Activated CD4-positive, alpha-beta T cell treated with anti-CD3 and anti-CD28 coated beads, Interleukin-2, amount 10 ng/mL, durations not matched to agents 24 days and 14 days (primary cell): ENCODE measurements at regions of chr3 and their contacts with region 1.

Region 1: DNA sequence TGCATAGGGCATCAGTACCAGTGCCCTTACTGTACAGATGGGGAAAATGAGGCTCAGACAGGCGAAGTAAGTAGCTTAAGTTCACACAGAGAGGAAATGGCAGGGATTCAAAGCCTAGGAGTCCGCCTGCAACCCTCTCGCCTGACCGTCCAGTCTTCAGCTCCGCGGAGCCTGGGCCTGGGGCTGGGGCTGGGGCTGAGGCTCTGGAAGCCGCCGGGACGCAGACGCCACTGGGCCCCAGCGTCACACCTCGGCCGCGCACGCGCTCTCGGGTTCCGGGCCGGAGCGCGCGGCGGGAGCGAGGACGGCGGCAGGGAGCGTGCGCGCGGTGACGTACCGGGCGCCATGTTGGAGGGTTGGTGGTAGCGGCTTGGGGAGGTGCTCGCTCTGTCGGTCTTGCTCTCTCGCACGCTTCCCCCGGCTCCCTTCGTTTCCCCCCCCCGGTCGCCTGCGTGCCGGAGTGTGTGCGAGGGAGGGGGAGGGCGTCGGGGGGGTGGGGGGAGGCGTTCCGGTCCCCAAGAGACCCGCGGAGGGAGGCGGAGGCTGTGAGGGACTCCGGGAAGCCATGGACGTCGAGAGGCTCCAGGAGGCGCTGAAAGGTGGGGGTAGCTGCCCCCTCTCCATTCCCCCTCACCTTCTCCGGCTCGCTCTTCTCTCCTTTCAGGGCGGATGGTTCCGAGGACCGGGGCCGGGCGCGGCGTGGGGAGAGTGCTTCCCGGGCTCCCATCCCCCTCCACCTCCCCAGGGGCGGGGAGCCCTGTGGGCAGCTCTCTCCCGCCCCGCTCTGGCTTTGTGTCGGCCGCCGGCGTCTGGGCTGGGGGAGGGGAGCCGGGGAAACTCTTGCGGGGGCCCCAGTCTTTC is at the start of gene PPP4R2:
- DNase-seq: peak; percentile 98
- H3K4me3 Mint-ChIP-seq: peak within 1 kb of the TSS; percentile 89
- H3K27ac Mint-ChIP-seq: peak within 1 kb of the TSS; percentile 89
- H3K4me1 Mint-ChIP-seq: peaks cover 35% of the 10 kb centered on the region
- H3K27me3 Mint-ChIP-seq: no peaks in the 10 kb centered on the region
- total RNA-seq, gene PPP4R2: 105 and 107 TPM in 2 replicates

Region 2: DNA sequence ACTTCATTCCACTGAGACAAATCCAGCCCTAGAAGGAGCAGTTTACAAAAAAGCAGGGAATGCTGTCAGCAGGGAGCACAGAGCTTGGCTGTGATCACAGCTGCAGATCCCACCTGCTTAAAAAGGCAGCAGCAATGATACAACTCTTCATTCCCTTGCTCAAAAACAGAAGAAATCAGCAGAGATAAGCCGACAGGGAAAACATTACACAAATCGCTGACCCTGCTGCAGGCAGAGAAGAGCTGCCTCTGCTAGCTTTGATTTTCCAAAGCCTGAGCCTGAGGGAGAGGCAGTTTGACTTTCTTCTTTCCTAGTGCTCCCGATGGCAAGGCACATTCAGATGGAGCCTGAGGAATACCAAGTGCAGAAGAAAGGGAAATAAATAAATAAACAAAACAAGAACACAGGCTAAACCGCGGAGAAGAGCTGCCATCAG is 228.7 kb before region 1 on chr3:
- intact Hi-C with region 1: no loop called
- DNase-seq: no peak
- H3K4me3 Mint-ChIP-seq: no peak overlapping the region
- H3K27ac Mint-ChIP-seq: no peak overlapping the region
- H3K4me1 Mint-ChIP-seq: peaks cover 4% of the 10 kb centered on the region
- H3K27me3 Mint-ChIP-seq: no peaks in the 10 kb centered on the region

Region 3: DNA sequence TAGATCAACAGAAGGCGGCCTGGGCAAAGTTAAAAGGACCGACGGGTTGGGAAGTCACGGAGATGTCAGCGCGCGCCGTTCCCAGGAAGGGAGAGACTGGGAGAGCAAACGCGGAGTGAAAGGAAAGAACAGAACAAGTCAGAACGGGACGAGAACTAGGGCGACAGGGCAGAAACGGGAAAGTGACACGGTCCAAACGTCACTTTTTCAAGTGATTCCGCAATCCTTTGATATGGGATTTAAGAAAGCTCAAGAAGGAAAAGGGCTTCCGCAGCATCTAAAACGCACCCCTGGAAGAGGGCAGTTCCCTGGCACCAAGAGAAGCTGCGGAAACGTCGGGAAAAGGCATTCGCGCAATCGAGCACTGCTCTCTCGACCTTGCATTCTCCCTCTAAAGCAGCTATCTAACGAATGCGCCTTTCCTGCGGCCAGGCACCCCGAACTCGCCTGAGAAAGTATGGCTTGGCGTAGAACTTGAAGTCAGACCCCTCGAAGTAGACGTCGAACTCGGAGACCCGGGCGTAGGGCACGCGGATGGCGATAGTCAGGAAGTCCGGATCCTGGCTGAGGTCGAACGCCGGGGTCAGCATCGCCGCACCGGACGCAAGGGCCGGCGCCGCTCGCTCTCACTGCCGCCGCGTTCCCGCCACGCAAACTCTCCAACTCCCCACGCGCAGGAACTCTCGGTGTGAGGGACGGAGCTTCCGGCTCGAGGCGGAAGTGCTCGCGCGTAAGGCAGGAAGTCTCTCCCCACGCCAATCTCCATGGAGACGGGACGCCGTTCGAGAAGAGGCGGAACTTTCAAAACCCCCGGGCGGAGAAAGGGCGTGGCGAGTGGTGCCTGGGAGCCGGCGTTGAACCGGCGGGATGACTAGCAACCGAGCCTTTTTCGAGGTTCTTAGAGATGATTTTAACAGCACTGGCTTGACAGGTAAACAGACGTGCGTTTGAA is 148.7 kb before region 1 on chr3 and contains the start of gene SHQ1:
- intact Hi-C with region 1: loop called (anchors 2 kb)
- DNase-seq: peak; percentile 99
- H3K4me3 Mint-ChIP-seq: peak within 1 kb of the TSS; percentile 93
- H3K27ac Mint-ChIP-seq: peak within 1 kb of the TSS; percentile 91
- H3K4me1 Mint-ChIP-seq: peaks cover 41% of the 10 kb centered on the region
- H3K27me3 Mint-ChIP-seq: no peaks in the 10 kb centered on the region
- total RNA-seq, gene SHQ1: 46.8 and 47.2 TPM in 2 replicates

Region 4: DNA sequence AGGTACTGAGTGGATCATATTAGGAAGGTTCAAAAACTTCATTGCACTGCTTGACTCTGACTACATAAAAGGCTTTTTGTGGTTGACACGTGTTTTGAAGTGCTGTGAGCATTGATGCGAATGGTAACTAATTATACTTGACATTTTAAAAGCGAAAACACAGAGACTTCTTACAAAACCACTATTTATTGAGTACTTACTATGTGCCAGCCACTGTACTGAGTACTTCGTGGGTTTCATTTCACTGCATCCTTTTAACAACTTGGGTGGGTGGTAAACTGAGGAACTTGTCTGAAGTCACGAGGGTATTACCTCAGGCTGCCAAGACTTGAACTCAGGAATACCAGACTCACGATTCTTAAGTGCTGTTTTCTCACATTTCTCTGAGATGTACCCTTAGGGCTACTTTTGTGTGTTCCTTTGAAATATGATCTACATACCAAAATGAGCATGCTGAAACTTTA is 45.4 kb before region 1 on chr3:
- intact Hi-C with region 1: loop called (anchors 1 kb)
- DNase-seq: no peak
- H3K4me3 Mint-ChIP-seq: no peak overlapping the region
- H3K27ac Mint-ChIP-seq: peak overlapping the region; percentile 34
- H3K4me1 Mint-ChIP-seq: peaks cover 14% of the 10 kb centered on the region
- H3K27me3 Mint-ChIP-seq: peaks cover 5% of the 10 kb centered on the region

Region 5: GRCh38 chr3:72977060-72977808 is 19.5 kb before region 1 on chr3:
- intact Hi-C with region 1: loop called (anchors 1 kb)
- DNase-seq: no peak
- H3K4me3 Mint-ChIP-seq: no peak overlapping the region
- H3K27ac Mint-ChIP-seq: peak overlapping the region; percentile 85
- H3K4me1 Mint-ChIP-seq: peaks cover 8% of the 10 kb centered on the region
- H3K27me3 Mint-ChIP-seq: peaks cover 8% of the 10 kb centered on the region

Region 6: DNA sequence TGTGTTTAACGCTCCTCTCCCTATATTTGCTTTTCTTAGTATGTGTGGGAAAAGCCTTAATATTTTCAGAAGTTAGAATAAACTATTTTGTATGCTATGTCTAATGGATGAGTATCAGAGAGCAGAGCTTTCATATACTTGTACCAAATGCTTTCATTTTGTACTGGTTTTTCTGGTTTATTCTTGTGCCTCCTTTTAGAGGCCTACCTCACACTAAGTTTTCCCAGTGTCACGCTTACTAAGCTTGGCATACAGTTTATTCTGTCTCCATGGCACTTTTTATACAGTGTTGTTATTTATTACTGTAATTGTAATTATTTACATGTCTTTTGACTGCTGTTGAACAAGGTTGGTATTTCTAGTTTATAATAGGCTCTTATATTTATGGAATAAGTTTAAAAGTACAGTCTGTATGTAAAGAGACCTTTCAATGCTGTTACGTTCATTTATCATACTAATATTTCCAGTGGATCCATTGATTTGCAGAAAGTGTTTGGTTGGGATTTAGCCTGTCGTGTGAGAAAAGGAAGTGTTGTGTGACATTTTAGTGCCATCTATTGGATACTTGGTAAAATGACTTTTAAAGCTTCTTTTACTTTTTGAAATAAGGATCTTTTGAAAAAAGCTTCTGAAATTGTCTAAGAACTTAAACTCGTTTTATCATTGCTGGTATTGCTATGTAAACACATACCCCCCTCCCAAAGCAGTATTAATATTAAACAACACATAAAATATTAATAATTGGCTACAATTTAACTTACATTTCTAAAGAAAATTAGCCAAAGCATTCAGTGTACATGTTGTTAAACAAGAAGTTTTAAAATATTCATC is 59.5 kb after region 1 on chr3:
- intact Hi-C with region 1: loop called (anchors 1 kb)
- DNase-seq: no peak
- H3K4me3 Mint-ChIP-seq: no peak overlapping the region
- H3K27ac Mint-ChIP-seq: no peak overlapping the region
- H3K4me1 Mint-ChIP-seq: peaks cover 7% of the 10 kb centered on the region
- H3K27me3 Mint-ChIP-seq: no peaks in the 10 kb centered on the region